Pancreas (tissue), 10 donors: ENCODE measurements at regions of chr1 and their contacts with region 1.

Region 1: DNA sequence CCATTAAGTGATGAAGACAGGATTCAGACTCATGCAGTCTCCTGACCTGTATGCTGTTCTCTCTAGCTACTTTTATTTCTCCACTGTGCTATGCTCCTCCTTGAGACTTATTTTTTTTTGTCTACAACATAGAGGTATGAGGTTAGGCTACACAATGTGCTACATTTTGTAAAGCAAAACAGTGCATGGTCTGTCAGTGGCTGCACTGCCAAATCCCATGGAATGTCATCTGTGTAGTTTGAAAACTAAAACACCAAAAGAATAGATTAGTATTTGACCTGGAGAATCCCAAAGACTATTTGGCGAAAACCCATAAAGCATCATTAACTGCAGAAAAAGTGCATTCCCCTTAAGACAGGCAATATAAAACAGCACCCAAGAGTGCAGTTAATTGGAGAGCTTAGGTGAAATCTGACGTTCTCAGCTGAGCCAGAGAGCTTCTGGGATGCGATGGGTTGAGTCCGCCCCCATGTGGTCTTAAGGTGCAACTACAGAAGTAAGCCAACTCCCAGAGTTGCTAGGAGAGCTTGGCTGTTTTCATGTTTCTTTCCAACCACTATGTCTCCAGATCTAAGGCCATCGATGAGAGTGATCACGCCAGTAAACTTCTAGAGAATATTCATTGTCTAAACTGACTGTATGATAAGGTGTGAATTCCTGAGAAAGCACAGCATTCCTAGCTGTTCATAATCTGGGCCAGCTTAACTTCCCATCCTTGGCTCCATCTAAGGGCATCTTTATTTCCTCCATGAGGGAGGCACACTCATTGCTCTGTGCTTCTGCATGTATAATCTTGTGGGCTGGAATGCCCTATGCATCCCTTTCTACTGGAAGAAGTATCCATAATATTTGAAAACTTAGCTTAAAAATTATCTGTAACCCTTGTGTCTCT is 20.7 kb upstream of the CYP2J2 start:
- DNase-seq: peak in 3 of 6 donors; percentile 31 to 71 (median 35)
- ATAC-seq: peak; percentile 89 to 99 (median 97)
- H3K4me3 ChIP-seq: no peak overlapping the region
- H3K27ac ChIP-seq: no peak overlapping the region
- H3K4me1 ChIP-seq: peaks cover 0 to 6% (median 0%) of the 10 kb centered on the region in 3 donors
- H3K27me3 ChIP-seq: no peaks in the 10 kb centered on the region
- CTCF ChIP-seq: peak; percentile 72 to 89 (median 86)

Region 2: GRCh38 chr1:59856725-59857338 is 90.5 kb before region 1 on chr1:
- intact Hi-C with region 1: no loop called
- DNase-seq: peak in 4 of 6 donors; percentile 36 to 55 (median 48)
- ATAC-seq: peak; percentile 88 to 94 (median 92)
- H3K4me3 ChIP-seq: no peak overlapping the region
- H3K27ac ChIP-seq: peak overlapping the region in 3 of 4 donors; percentile 19 to 67 (median 58)
- H3K4me1 ChIP-seq: peaks cover 11 to 35% (median 25%) of the 10 kb centered on the region in 3 donors
- H3K27me3 ChIP-seq: no peaks in the 10 kb centered on the region
- CTCF ChIP-seq: no peak

Region 3: DNA sequence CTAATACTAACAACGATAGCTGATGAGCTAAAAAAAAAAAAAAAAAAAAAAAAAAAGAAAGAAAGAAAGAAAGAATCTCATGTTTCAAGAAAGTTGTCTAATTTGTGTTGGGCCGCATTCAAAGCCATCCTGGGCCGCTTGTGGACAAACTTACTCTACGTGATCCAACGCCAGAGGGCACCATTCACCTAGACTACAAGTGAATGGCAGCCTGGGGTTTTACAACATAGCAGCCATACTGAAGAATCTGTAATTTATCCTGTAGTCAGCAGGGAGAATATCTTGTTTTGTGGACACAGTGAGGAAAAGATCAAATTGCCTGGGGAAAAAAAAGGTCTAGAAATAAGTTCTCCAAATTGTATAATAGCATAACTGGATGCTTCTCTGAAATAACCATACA is 67.7 kb before region 1 on chr1:
- intact Hi-C with region 1: loop called in 2 of 3 experiments (anchors 5 to 10 kb)
- DNase-seq: peak in 5 of 6 donors; percentile 42 to 80 (median 61)
- ATAC-seq: peak; percentile 83 to 98 (median 95)
- H3K4me3 ChIP-seq: no peak overlapping the region
- H3K27ac ChIP-seq: no peak overlapping the region
- H3K4me1 ChIP-seq: no peaks in the 10 kb centered on the region
- H3K27me3 ChIP-seq: no peaks in the 10 kb centered on the region
- CTCF ChIP-seq: peak; percentile 31 to 51 (median 32)

Region 4: GRCh38 chr1:59892841-59893811 is 54.2 kb before region 1 on chr1:
- intact Hi-C with region 1: loop called in 2 of 3 experiments (anchors 10 kb)
- DNase-seq: no peak
- ATAC-seq: peak; percentile 70 to 93 (median 84)
- H3K4me3 ChIP-seq: no peak overlapping the region
- H3K27ac ChIP-seq: peak overlapping the region in 2 of 4 donors; percentile 38 to 66
- H3K4me1 ChIP-seq: peaks cover 3 to 15% (median 12%) of the 10 kb centered on the region in 3 donors
- H3K27me3 ChIP-seq: no peaks in the 10 kb centered on the region
- CTCF ChIP-seq: no peak